Lower leg skin (tissue), 4 donors: ENCODE measurements at regions of chr11 and their contacts with region 1.

Region 1: DNA sequence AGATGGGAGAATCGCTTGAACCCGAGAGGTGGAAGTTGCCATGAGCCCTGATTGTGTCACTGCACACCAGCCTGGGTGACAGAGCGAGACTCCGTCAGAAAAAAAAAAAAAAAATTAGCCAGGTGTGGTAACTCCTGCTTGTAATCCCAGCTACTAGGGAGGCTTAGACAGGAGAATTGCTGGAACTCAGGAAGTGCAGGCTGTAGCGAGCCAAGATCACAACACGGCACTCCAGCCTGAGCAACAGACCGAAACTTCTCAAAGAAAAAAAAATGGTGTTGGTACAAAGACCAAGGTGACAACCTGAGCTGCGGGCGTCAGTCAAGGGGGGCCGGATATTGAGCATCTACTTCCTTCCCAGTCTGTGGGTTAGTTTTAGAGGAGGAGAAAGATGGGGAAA is 48.4 kb upstream of the HSPA8 start:
- DNase-seq: no peak
- H3K4me3 ChIP-seq: no peak overlapping the region
- CTCF ChIP-seq: no peak
- POLR2A ChIP-seq: no peak

Region 2: GRCh38 chr11:123246749-123247495 is 136.6 kb after region 1 on chr11:
- intact Hi-C with region 1: loop called (anchors 5 kb)
- DNase-seq: peak; percentile 58 to 94
- H3K4me3 ChIP-seq: no peak overlapping the region
- CTCF ChIP-seq: peak in 1 of 3 donors; percentile 73
- POLR2A ChIP-seq: no peak